Caco-2 (cell line): ENCODE measurements at regions of chr22 and their contacts with region 1.

Region 1: GRCh38 chr22:42090596-42091454 is at the start of gene NDUFA6:
- DNase-seq: peak; percentile 98 to 99
- H3K4me3 ChIP-seq: peak within 1 kb of the TSS; percentile 94
- H3K4me3 Mint-ChIP-seq: peak within 1 kb of the TSS; percentile 93
- H3K27ac Mint-ChIP-seq: peak within 1 kb of the TSS; percentile 99
- H3K4me1 ChIP-seq: no peaks in the 10 kb centered on the region
- H3K4me1 Mint-ChIP-seq: peaks cover 9% of the 10 kb centered on the region
- H3K27me3 ChIP-seq: no peaks in the 10 kb centered on the region
- H3K27me3 Mint-ChIP-seq: no peaks in the 10 kb centered on the region
- CTCF ChIP-seq: peak; percentile 67 to 96
- total RNA-seq, gene NDUFA6: 119 and 124 TPM in 2 replicates

Region 2: GRCh38 chr22:42070517-42071422 is 20.1 kb before region 1 on chr22 and contains the start of gene NAGA:
- CTCF ChIA-PET with region 1: interaction called, 4 read pairs
- POLR2A ChIA-PET with region 1: interaction called, 8 read pairs
- intact Hi-C with region 1: loop called (anchors 2 kb)
- DNase-seq: peak; percentile 94 to 96
- H3K4me3 ChIP-seq: peak within 1 kb of the TSS; percentile 70
- H3K4me3 Mint-ChIP-seq: peak within 1 kb of the TSS; percentile 92
- H3K27ac Mint-ChIP-seq: peak within 1 kb of the TSS; percentile 89
- H3K4me1 ChIP-seq: peaks cover 26% of the 10 kb centered on the region
- H3K4me1 Mint-ChIP-seq: peaks cover 5% of the 10 kb centered on the region
- H3K27me3 ChIP-seq: no peaks in the 10 kb centered on the region
- H3K27me3 Mint-ChIP-seq: no peaks in the 10 kb centered on the region
- CTCF ChIP-seq: no peak
- total RNA-seq, gene NAGA: 27.8 and 28.3 TPM in 2 replicates

Region 3: GRCh38 chr22:42101199-42101598 is 10.4 kb after region 1 on chr22:
- CTCF ChIA-PET with region 1: no interaction called
- POLR2A ChIA-PET with region 1: no interaction called
- intact Hi-C with region 1: no loop called
- DNase-seq: no peak
- H3K4me3 ChIP-seq: no peak overlapping the region
- H3K4me3 Mint-ChIP-seq: no peak overlapping the region
- H3K27ac Mint-ChIP-seq: no peak overlapping the region
- H3K4me1 ChIP-seq: no peaks in the 10 kb centered on the region
- H3K4me1 Mint-ChIP-seq: no peaks in the 10 kb centered on the region
- H3K27me3 ChIP-seq: no peaks in the 10 kb centered on the region
- H3K27me3 Mint-ChIP-seq: no peaks in the 10 kb centered on the region
- CTCF ChIP-seq: no peak

Region 4: DNA sequence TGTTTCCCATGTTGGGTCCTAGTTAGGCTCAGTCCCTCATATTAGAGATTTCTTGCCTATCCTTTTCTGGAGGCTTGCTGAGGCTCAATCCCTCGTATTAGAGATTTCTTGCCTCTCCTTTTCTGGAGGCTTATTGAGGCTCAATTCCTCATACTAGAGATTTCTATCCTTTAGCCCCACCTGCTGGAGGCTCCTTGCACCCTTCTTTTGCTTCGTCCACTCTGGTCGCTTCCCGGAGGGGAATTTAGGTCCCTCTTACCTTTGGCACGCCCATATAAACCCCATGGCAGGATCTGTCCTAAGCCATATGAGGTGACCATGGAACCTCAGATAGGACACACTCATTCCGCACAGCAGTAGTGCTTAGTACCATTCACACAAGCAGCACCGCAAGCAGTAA is 23.9 kb after region 1 on chr22:
- CTCF ChIA-PET with region 1: interaction called, 46 read pairs
- POLR2A ChIA-PET with region 1: interaction called, 5 read pairs
- intact Hi-C with region 1: loop called (anchors 1 kb)
- DNase-seq: peak in 1 of 2 experiments; percentile 47
- H3K4me3 ChIP-seq: no peak overlapping the region
- H3K4me3 Mint-ChIP-seq: no peak overlapping the region
- H3K27ac Mint-ChIP-seq: no peak overlapping the region
- H3K4me1 ChIP-seq: no peaks in the 10 kb centered on the region
- H3K4me1 Mint-ChIP-seq: no peaks in the 10 kb centered on the region
- H3K27me3 ChIP-seq: no peaks in the 10 kb centered on the region
- H3K27me3 Mint-ChIP-seq: no peaks in the 10 kb centered on the region
- CTCF ChIP-seq: peak; percentile 34 to 35

Region 5: GRCh38 chr22:42180349-42180842 is 89.6 kb after region 1 on chr22:
- CTCF ChIA-PET with region 1: no interaction called
- POLR2A ChIA-PET with region 1: no interaction called
- intact Hi-C with region 1: no loop called
- DNase-seq: no peak
- H3K4me3 ChIP-seq: no peak overlapping the region
- H3K4me3 Mint-ChIP-seq: no peak overlapping the region
- H3K27ac Mint-ChIP-seq: no peak overlapping the region
- H3K4me1 ChIP-seq: peaks cover 5% of the 10 kb centered on the region; the same call in 1 of the 2 replicates
- H3K4me1 Mint-ChIP-seq: no peaks in the 10 kb centered on the region
- H3K27me3 ChIP-seq: no peaks in the 10 kb centered on the region
- H3K27me3 Mint-ChIP-seq: no peaks in the 10 kb centered on the region
- CTCF ChIP-seq: no peak

Region 6: GRCh38 chr22:42313804-42314581 is 223.2 kb after region 1 on chr22:
- CTCF ChIA-PET with region 1: no interaction called
- POLR2A ChIA-PET with region 1: no interaction called
- intact Hi-C with region 1: loop called (anchors 10 kb)
- DNase-seq: peak; percentile 94 to 98
- H3K4me3 ChIP-seq: no peak overlapping the region
- H3K4me3 Mint-ChIP-seq: peak overlapping the region; percentile 52
- H3K27ac Mint-ChIP-seq: peak overlapping the region; percentile 95
- H3K4me1 ChIP-seq: peaks cover 61% of the 10 kb centered on the region
- H3K4me1 Mint-ChIP-seq: peaks cover 42% of the 10 kb centered on the region
- H3K27me3 ChIP-seq: no peaks in the 10 kb centered on the region
- H3K27me3 Mint-ChIP-seq: no peaks in the 10 kb centered on the region
- CTCF ChIP-seq: peak; percentile 67 to 91

Region 7: GRCh38 chr22:42444077-42444904 is 353.5 kb after region 1 on chr22:
- CTCF ChIA-PET with region 1: interaction called, 13 read pairs
- POLR2A ChIA-PET with region 1: no interaction called
- intact Hi-C with region 1: loop called (anchors 1 kb)
- DNase-seq: peak; percentile 70 to 80
- H3K4me3 ChIP-seq: no peak overlapping the region
- H3K4me3 Mint-ChIP-seq: peak overlapping the region; percentile 37
- H3K27ac Mint-ChIP-seq: no peak overlapping the region
- H3K4me1 ChIP-seq: peaks cover 6% of the 10 kb centered on the region; the same call in 1 of the 2 replicates
- H3K4me1 Mint-ChIP-seq: no peaks in the 10 kb centered on the region
- H3K27me3 ChIP-seq: no peaks in the 10 kb centered on the region
- H3K27me3 Mint-ChIP-seq: no peaks in the 10 kb centered on the region
- CTCF ChIP-seq: peak; percentile 79 to 80